ENCODE measurements at regions of chr3 and their contacts with region 1.

Region 1: GRCh38 chr3:157088601-157089454 is 71.1 kb downstream of the CCNL1 start:
- DNase-seq: peak; percentile 85 to 96 (median 94)
- ATAC-seq: peak; percentile 91 to 96
- H3K4me3 Mint-ChIP-seq: peak overlapping the region; percentile 82 to 92 (median 87)
- H3K27ac Mint-ChIP-seq: peak overlapping the region; percentile 90 to 99 (median 96)
- H3K4me1 Mint-ChIP-seq: peaks cover 18 to 32% (median 20%) of the 10 kb centered on the region in 4 donors
- H3K27me3 Mint-ChIP-seq: peaks cover 0 to 2% (median 0%) of the 10 kb centered on the region in 5 donors

Region 2: GRCh38 chr3:156554842-156555687 is 533.8 kb before region 1 on chr3 and contains the start of gene SSR3:
- POLR2A ChIA-PET with region 1: interaction called, 15 read pairs
- DNase-seq: peak; percentile 92 to 99 (median 98)
- ATAC-seq: peak; percentile 98
- H3K4me3 Mint-ChIP-seq: peak within 1 kb of the TSS; percentile 92 to 99 (median 96)
- H3K27ac Mint-ChIP-seq: peak within 1 kb of the TSS; percentile 88 to 98 (median 96)
- H3K4me1 Mint-ChIP-seq: peaks cover 22 to 56% (median 42%) of the 10 kb centered on the region in 4 donors
- H3K27me3 Mint-ChIP-seq: peaks cover 0 to 1% (median 0%) of the 10 kb centered on the region in 5 donors
- polyA plus RNA-seq, gene SSR3: 81.7 to 93.9 (median 86.3) TPM

Region 3: GRCh38 chr3:157059661-157060060 is 29.2 kb before region 1 on chr3:
- POLR2A ChIA-PET with region 1: no interaction called
- DNase-seq: no peak
- ATAC-seq: no peak
- H3K4me3 Mint-ChIP-seq: no peak overlapping the region
- H3K27ac Mint-ChIP-seq: no peak overlapping the region
- H3K4me1 Mint-ChIP-seq: peaks cover 0 to 4% (median 0%) of the 10 kb centered on the region in 4 donors
- H3K27me3 Mint-ChIP-seq: peaks cover 0 to 16% (median 8%) of the 10 kb centered on the region in 5 donors

Region 4: DNA sequence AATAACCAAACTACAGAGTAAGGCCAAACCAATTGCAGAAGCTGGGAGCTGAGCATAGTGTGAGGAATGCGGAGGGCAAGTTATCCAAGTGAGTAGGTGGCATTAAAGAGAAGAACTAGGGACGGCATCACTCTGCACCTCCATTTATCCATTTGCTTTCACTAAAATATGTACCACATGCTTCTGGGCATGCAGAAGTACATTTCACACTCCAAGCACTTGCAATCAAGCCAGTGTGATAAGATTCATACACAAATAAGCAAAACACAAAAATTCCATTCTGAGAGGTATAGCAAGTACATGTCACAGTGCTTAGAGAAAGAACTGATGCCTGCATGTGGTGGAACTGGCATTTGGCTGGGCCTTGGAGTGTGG is 10.0 kb before region 1 on chr3:
- POLR2A ChIA-PET with region 1: no interaction called
- DNase-seq: no peak
- ATAC-seq: no peak
- H3K4me3 Mint-ChIP-seq: no peak overlapping the region
- H3K27ac Mint-ChIP-seq: peak overlapping the region in 3 of 10 donors; percentile 1 to 68 (median 58)
- H3K4me1 Mint-ChIP-seq: peaks cover 0 to 20% (median 17%) of the 10 kb centered on the region in 4 donors
- H3K27me3 Mint-ChIP-seq: no peaks in the 10 kb centered on the region

Region 5: GRCh38 chr3:157130467-157131251 is 41.8 kb after region 1 on chr3:
- POLR2A ChIA-PET with region 1: interaction called, 67 read pairs
- DNase-seq: peak; percentile 54 to 92 (median 78)
- ATAC-seq: peak; percentile 64 to 74
- H3K4me3 Mint-ChIP-seq: peak overlapping the region; percentile 57 to 84 (median 72)
- H3K27ac Mint-ChIP-seq: peak overlapping the region; percentile 93 to 98 (median 98)
- H3K4me1 Mint-ChIP-seq: peaks cover 39 to 70% (median 66%) of the 10 kb centered on the region in 4 donors
- H3K27me3 Mint-ChIP-seq: no peaks in the 10 kb centered on the region

Region 6: GRCh38 chr3:157174649-157175498 is 86.0 kb after region 1 on chr3:
- POLR2A ChIA-PET with region 1: interaction called, 16 read pairs
- DNase-seq: peak; percentile 91 to 99 (median 98)
- ATAC-seq: peak; percentile 91 to 93
- H3K4me3 Mint-ChIP-seq: peak overlapping the region; percentile 81 to 98 (median 94)
- H3K27ac Mint-ChIP-seq: peak overlapping the region; percentile 95 to 99 (median 98)
- H3K4me1 Mint-ChIP-seq: peaks cover 12 to 44% (median 33%) of the 10 kb centered on the region in 4 donors
- H3K27me3 Mint-ChIP-seq: peaks cover 0 to 3% (median 0%) of the 10 kb centered on the region in 5 donors

Measured in naive thymus-derived CD8-positive, alpha-beta T cell (primary cell).